ENCODE measurements at regions of chr16 and their contacts with region 1.

Region 1: DNA sequence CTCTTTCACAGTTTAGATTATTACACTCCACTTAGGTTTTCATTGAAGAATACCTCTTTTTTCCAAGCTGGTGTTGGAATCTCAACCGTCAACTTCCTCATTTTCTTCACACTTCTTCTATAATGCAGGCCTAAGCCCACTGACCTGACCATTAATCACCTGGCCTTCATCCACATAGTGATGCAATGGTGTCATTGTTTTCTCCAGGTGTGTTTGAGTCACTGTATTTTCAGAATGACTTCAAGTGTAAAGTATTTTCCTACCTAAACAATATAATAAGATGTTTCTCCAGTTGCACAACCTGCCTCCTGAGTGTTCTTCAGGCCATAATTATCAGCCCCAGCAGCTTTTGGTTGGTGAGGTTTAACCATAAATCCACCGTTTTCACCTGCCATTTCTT is 1675.1 kb downstream of the TP53TG3F start:
- DNase-seq: peak; percentile 88
- H3K4me3 Mint-ChIP-seq: no peak overlapping the region
- H3K27ac Mint-ChIP-seq: peak overlapping the region; percentile 6
- H3K4me1 Mint-ChIP-seq: peaks cover 16% of the 10 kb centered on the region
- H3K27me3 Mint-ChIP-seq: no peaks in the 10 kb centered on the region
- CTCF ChIP-seq: no peak

Region 2: GRCh38 chr16:35188288-35189155 is 54.1 kb after region 1 on chr16:
- CTCF ChIA-PET with region 1: no interaction called
- POLR2A ChIA-PET with region 1: no interaction called
- intact Hi-C with region 1: no loop called
- DNase-seq: peak; percentile 27
- H3K4me3 Mint-ChIP-seq: no peak overlapping the region
- H3K27ac Mint-ChIP-seq: no peak overlapping the region
- H3K4me1 Mint-ChIP-seq: no peaks in the 10 kb centered on the region
- H3K27me3 Mint-ChIP-seq: no peaks in the 10 kb centered on the region
- CTCF ChIP-seq: peak; percentile 25

Region 3: DNA sequence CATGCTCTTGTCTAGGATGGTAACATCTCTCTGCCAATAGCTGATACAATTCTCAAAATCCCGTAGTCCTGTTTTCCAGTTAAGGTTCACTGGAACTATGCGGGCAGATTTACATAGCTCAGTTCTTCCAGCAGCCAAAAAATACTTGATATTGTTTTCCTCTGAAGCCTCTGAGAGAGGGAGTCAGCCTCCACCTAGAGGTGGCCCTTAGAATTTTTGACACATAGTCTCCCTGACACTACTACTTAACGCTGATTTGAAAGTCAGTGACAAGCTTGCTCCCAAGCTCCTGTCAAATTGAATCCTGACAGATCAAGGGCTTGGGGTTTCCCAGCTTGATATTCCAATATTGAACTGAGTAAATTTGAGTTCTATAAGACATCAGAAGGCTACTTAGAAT is 105.1 kb after region 1 on chr16:
- CTCF ChIA-PET with region 1: no interaction called
- POLR2A ChIA-PET with region 1: no interaction called
- intact Hi-C with region 1: no loop called
- DNase-seq: no peak
- H3K4me3 Mint-ChIP-seq: no peak overlapping the region
- H3K27ac Mint-ChIP-seq: no peak overlapping the region
- H3K4me1 Mint-ChIP-seq: no peaks in the 10 kb centered on the region
- H3K27me3 Mint-ChIP-seq: no peaks in the 10 kb centered on the region
- CTCF ChIP-seq: no peak

Region 4: GRCh38 chr16:35258381-35258780 is 123.9 kb after region 1 on chr16:
- CTCF ChIA-PET with region 1: no interaction called
- POLR2A ChIA-PET with region 1: no interaction called
- intact Hi-C with region 1: no loop called
- DNase-seq: no peak
- H3K4me3 Mint-ChIP-seq: no peak overlapping the region
- H3K27ac Mint-ChIP-seq: no peak overlapping the region
- H3K4me1 Mint-ChIP-seq: no peaks in the 10 kb centered on the region
- H3K27me3 Mint-ChIP-seq: no peaks in the 10 kb centered on the region
- CTCF ChIP-seq: no peak

Region 5: DNA sequence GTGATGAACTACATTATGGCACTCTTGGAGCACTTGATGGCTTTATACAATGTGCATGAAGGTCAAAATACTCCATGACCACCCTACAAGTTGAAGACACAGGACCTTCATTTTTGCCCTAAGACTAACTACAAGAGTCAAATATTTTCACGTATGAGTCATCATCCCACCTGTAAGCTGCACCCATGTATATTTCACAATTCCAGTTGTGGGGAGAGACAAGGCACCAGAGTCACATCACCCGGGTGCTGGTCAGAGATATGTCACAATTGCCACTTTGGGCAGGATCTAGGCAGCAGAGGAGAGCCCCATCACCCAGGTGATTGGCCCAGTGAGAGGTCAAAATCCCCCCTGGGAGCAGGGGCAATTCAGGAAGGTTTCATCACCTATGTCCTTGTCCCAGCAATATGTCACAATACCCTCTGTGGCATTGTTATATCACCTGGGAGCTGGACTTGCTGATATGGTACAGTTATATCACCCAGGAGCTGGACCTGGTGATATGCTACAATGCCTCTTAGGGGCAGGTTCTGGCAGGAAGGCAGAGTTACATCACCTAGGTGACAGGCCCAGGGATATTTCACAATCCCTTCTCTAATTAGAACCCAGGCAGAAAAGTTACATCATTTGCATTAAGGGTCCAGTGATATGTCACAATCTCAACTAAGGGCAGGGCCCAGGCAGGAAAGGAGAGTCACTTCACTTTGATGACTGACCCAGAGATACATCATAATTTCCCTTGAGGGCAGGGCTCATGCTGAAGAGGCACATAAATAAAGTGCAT is 164.2 kb after region 1 on chr16:
- CTCF ChIA-PET with region 1: no interaction called
- POLR2A ChIA-PET with region 1: interaction called, 3 read pairs
- intact Hi-C with region 1: loop called (anchors 10 kb)
- DNase-seq: peak; percentile 71
- H3K4me3 Mint-ChIP-seq: no peak overlapping the region
- H3K27ac Mint-ChIP-seq: no peak overlapping the region
- H3K4me1 Mint-ChIP-seq: peaks cover 20% of the 10 kb centered on the region
- H3K27me3 Mint-ChIP-seq: no peaks in the 10 kb centered on the region
- CTCF ChIP-seq: no peak